A549 (cell line): ENCODE measurements at regions of chr5 and their contacts with region 1.

Region 1: DNA sequence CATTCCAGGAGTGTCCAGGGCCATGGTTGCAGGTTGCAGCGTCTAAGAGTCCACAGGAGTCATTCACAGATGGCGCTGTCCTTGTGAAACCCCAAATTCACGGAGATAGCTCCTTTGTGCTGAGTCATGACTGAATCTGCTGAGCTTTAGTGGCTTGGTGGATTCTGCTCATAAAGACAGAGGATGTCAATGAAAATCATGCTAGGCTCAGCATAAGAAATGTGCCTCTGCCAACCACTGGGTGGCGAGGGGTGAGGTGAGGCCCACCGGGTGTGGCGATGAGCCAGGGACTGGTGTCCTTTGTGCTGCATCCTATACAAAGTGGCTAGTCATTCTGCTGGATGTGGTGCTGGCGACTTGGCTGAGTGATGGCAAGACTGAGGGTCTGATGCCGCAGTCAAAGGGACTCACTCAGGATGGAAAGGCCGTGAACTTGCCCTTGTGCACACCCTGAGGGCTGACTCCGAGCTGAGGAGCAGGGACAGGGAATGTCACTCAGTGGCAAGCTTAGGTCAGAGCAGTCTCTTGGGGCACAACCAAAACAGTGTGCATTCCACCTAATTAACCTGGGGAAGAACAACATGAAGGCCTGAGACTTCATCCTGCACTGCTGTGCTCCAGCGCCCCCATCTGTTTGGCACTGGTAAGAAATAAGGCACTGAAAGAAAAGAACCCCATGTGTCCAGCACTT is 71.5 kb downstream of the DAP start:
- DNase-seq: peak; percentile 64 to 67
- ATAC-seq: peak; percentile 74 to 90; a peak in 5 of 6 replicates
- H3K4me3 ChIP-seq: no peak overlapping the region
- H3K27ac ChIP-seq: peak overlapping the region; percentile 62 to 77; a peak in 5 of 6 replicates
- H3K4me1 ChIP-seq: peaks cover 21% of the 10 kb centered on the region
- CTCF ChIP-seq: peak; percentile 30
- EP300 ChIP-seq: no peak
- POLR2A ChIP-seq: no peak
- RAD21 ChIP-seq: peak; percentile 24 to 72; a peak in 3 of 5 replicates

Region 2: DNA sequence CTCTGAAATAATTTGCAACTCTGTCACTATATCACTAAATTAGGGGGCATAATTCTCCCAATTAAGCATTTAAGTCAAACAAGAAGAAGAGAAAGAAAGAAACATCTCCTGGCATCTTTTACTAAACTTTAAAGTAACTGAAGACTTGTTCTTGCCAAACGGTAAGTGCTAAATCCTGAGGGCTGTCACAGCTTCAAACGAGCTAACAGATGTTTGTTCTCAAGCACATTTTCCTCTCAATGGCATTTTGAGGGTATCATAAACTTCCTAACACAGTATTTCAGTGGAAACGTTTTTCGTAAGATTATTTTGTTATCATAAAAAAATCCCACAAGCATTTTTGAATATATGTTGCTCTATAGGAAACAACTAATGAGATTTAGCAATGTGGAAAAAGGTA is 889.9 kb before region 1 on chr5:
- CTCF ChIA-PET with region 1: no interaction called
- POLR2A ChIA-PET with region 1: no interaction called
- DNase-seq: no peak
- ATAC-seq: no peak
- H3K4me3 ChIP-seq: no peak overlapping the region
- H3K27ac ChIP-seq: no peak overlapping the region
- H3K4me1 ChIP-seq: no peaks in the 10 kb centered on the region
- CTCF ChIP-seq: no peak
- EP300 ChIP-seq: no peak
- POLR2A ChIP-seq: no peak
- RAD21 ChIP-seq: no peak

Region 3: GRCh38 chr5:10701567-10702039 is 12.1 kb after region 1 on chr5:
- CTCF ChIA-PET with region 1: interaction called, 14 read pairs
- POLR2A ChIA-PET with region 1: no interaction called
- DNase-seq: peak; percentile 41 to 46
- ATAC-seq: peak in 1 of 2 experiments; percentile 77; a peak in 3 of 6 replicates
- H3K4me3 ChIP-seq: no peak overlapping the region
- H3K27ac ChIP-seq: no peak overlapping the region
- H3K4me1 ChIP-seq: peaks cover 24% of the 10 kb centered on the region
- CTCF ChIP-seq: peak; percentile 51
- EP300 ChIP-seq: no peak
- POLR2A ChIP-seq: no peak
- RAD21 ChIP-seq: peak; percentile 60 to 70